Activated T-helper 2 cell treated with anti-CD3 and anti-CD28 coated beads, Interferon-gamma antibody, Interleukin-2, Interleukin-4, amounts not matched to agents 10 μg/mL and 5 μg/mL and 100 μg/mL, durations not matched to agents 14 hours and 24 hours and 36 hours (primary cell): ENCODE measurements at regions of chr15 and their contacts with region 1.

Region 1: DNA sequence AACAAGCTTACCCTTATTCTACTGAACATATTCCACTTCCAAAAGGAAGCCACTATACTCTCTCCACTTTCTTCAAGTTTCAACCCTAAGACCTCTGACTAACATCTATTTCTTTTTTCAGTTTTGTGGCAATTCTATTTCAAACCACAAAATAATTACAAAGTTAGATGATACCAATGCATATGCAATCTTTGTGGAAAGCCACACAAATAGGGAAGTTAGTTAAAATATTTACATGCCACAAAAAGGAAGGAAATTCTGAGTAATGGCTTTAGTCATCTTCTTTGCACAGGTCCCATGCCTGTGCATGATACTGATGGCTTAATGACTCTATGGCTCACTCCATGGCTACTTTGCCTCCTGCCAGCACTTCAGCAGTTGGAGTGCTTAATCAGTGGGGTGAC is 57.0 kb upstream of the MCTP2 start:
- DNase-seq: no peak
- H3K4me3 Mint-ChIP-seq: peak overlapping the region; percentile 0
- H3K27ac Mint-ChIP-seq: peak overlapping the region; percentile 28
- H3K4me1 Mint-ChIP-seq: peaks cover 54% of the 10 kb centered on the region
- H3K27me3 Mint-ChIP-seq: peaks cover 1% of the 10 kb centered on the region

Region 2: DNA sequence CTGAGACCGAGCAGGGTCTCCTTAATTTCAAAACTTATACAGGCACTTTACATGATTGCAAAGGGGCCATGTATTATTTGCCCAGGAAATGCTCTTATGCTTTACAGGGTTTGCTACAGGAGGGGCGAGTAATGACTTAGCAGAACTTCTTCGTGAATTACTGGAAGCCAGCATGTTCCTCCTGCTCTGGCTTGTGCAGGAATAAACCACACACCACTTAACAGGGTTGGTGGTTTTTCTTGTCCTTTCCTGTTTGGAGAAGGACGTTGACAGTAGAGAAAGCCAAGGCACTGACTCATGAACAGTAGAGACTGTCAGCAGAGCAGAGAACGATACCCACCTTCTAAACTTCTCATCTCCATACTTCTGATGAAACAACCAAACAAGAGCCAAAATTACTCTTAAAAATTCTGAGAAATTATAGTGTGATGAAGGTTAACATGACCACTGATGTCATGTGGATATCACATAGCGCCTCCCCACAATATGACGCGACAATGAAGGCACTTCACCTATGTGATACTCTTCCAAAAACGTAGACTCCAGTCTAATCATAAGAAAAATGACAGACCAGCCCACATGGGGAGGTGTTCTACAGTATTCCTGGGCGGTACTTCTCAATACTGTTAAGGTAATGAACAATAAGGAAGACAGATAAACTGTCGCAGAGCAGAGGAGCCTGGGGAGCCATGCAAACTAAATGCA is 32.2 kb after region 1 on chr15:
- intact Hi-C with region 1: loop called (anchors 1 kb)
- DNase-seq: peak; percentile 61
- H3K4me3 Mint-ChIP-seq: peak overlapping the region; percentile 60
- H3K27ac Mint-ChIP-seq: peak overlapping the region; percentile 96
- H3K4me1 Mint-ChIP-seq: peaks cover 40% of the 10 kb centered on the region
- H3K27me3 Mint-ChIP-seq: no peaks in the 10 kb centered on the region

Region 3: GRCh38 chr15:94317201-94317600 is 142.8 kb after region 1 on chr15:
- intact Hi-C with region 1: no loop called
- DNase-seq: no peak
- H3K4me3 Mint-ChIP-seq: no peak overlapping the region
- H3K27ac Mint-ChIP-seq: no peak overlapping the region
- H3K4me1 Mint-ChIP-seq: peaks cover 33% of the 10 kb centered on the region
- H3K27me3 Mint-ChIP-seq: no peaks in the 10 kb centered on the region